ENCODE measurements at regions of chr11 and their contacts with region 1.

Region 1: DNA sequence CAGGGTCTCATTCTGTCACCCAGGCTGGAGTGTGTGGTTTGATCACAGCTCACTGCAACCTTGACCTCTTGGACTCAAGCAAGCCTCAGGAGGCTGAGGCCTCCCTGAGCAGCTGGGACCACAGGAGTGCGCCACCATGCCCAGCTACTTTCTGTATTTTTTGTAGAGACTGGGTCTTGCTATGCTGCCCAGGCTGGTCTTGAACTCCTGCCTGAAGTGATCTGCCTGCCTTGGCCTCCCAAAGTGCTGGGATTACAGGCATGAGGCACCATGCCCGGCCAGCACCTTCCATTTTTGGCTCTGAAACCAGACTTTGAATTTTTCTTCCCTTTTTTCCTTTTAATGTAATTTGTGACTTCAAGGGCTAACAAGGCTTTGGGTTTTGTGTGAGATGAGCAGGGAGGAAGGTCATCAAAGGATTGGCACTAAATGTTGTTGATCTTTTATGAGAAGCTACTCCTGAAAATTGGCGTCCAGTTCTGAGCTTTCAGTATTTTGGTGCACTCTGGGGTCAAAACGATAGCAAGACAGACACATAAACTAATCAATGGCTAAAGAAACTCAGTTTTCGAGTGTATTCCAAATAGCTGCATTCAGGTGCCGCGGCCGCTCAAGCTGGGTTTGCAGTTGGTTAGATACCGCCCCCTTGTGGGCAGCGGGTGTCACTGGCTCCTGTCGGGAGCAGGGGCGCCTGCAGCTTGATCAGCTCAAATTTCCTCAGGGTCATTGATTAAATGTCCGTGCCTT is 51.9 kb upstream of the CLMP start:
- DNase-seq: peak; percentile 93
- ATAC-seq: peak; percentile 96
- H3K4me3 Mint-ChIP-seq: no peak overlapping the region
- H3K27ac Mint-ChIP-seq: no peak overlapping the region
- H3K4me1 Mint-ChIP-seq: peaks cover 4% of the 10 kb centered on the region
- H3K27me3 Mint-ChIP-seq: peaks cover 5% of the 10 kb centered on the region

Region 2: GRCh38 chr11:123103326-123103980 is 143.5 kb before region 1 on chr11:
- CTCF ChIA-PET with region 1: interaction called, 141 read pairs
- POLR2A ChIA-PET with region 1: no interaction called
- intact Hi-C with region 1: loop called (anchors 2 kb)
- DNase-seq: peak; percentile 46
- ATAC-seq: peak; percentile 77
- H3K4me3 Mint-ChIP-seq: no peak overlapping the region
- H3K27ac Mint-ChIP-seq: no peak overlapping the region
- H3K4me1 Mint-ChIP-seq: peaks cover 24% of the 10 kb centered on the region
- H3K27me3 Mint-ChIP-seq: no peaks in the 10 kb centered on the region

Region 3: GRCh38 chr11:123166071-123166559 is 80.8 kb before region 1 on chr11:
- CTCF ChIA-PET with region 1: interaction called, 13 read pairs
- POLR2A ChIA-PET with region 1: no interaction called
- intact Hi-C with region 1: loop called in 1 of 2 experiments (anchors 1 kb)
- DNase-seq: peak; percentile 54
- ATAC-seq: peak; percentile 39
- H3K4me3 Mint-ChIP-seq: no peak overlapping the region
- H3K27ac Mint-ChIP-seq: no peak overlapping the region
- H3K4me1 Mint-ChIP-seq: no peaks in the 10 kb centered on the region
- H3K27me3 Mint-ChIP-seq: peaks cover 1% of the 10 kb centered on the region

Region 4: DNA sequence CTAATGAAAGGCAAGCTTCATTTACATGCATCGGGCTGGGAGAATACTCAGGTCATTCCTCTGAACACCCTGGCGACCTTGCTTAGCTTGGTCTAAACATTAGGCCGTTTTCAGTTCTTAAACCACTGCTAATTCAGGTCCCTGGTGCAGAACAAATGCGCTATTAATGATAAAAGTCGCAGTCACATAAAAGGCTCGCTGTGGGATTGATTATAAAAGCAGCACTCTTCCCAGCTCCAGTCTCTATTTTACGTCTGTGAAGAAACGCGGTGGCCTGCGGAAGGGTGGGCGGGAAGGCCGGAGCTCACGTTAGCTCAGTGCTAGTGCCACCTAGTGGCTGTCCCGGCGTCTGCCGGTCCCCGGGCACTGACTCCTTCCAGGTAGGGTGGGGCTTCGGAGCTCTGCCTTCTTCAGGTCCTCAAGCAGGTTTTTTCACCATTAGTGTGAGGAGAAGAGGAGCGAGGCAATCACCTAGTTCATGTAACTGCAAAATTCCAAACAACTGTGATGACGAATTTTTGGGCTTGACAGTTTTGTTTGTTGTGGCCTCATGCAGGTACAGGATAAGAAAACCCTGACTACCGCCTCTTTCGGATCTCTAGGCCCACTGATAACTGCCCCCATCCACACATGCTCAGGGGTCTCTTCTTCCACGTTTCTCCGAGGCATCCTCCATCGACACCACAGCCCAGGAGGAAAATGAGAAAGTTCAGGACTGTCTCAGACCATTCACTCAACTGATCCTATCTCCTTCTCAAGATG is 14.6 kb after region 1 on chr11:
- CTCF ChIA-PET with region 1: interaction called, 37 read pairs
- POLR2A ChIA-PET with region 1: no interaction called
- intact Hi-C with region 1: no loop called
- DNase-seq: peak; percentile 90
- ATAC-seq: peak; percentile 90
- H3K4me3 Mint-ChIP-seq: peak overlapping the region; percentile 22
- H3K27ac Mint-ChIP-seq: no peak overlapping the region
- H3K4me1 Mint-ChIP-seq: peaks cover 6% of the 10 kb centered on the region
- H3K27me3 Mint-ChIP-seq: peaks cover 12% of the 10 kb centered on the region

Region 5: GRCh38 chr11:123853038-123853437 is 606.1 kb after region 1 on chr11:
- CTCF ChIA-PET with region 1: no interaction called
- POLR2A ChIA-PET with region 1: no interaction called
- intact Hi-C with region 1: no loop called
- DNase-seq: no peak
- ATAC-seq: no peak
- H3K4me3 Mint-ChIP-seq: no peak overlapping the region
- H3K27ac Mint-ChIP-seq: no peak overlapping the region
- H3K4me1 Mint-ChIP-seq: no peaks in the 10 kb centered on the region
- H3K27me3 Mint-ChIP-seq: peaks cover 11% of the 10 kb centered on the region